MCF 10A (cell line): ENCODE measurements at regions of chr4 and their contacts with region 1.

Region 1: DNA sequence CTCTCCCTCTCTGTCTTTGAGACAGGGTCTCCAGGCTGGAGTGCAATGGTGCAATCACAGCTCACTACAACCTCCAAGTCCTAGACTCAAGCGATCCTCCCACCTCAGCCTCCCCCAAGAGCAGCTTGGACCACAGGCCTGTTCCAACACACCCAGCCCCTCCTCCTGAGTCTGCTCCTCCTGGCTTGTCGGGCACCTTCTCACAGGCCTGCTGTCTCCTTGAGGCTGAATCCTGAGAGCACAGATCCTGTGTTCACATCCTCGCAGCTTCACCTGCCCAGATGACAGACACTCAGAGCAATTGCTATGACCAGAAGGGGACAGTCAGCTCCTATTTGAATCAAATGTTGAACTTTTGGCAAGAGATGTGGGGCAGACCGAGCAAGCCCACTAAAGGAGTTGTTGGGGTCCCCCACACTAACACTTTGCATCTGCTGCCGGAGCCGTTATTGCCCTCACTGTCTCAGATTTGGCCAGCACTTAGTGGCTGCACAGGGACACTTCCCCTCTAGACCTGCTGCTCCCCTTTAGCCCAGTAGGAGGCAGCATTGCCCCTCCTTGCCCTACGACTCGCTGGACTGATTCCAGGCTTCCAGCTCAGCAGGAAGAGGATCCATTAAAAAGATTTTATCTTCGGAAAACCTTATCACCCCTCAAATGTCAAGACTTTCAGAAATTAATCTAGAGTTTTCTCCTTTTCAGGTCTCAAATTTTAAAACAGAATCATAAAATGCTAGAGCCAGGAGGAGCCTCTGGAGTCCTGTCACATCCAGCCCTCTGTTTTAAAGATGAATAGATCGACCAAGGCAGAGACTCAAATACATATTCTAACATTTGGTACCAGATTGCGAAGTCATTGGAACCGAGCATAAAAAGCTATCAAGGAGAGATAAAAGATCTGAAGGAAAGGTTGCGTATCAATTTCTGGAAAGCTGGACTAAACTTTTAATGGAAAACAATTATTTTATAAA is 113.7 kb downstream of the USP46 start:
- DNase-seq: peak; percentile 78
- H3K4me3 Mint-ChIP-seq: no peak overlapping the region
- H3K27ac Mint-ChIP-seq: no peak overlapping the region
- H3K4me1 Mint-ChIP-seq: no peaks in the 10 kb centered on the region
- H3K27me3 Mint-ChIP-seq: no peaks in the 10 kb centered on the region
- CTCF ChIP-seq: peak; percentile 89

Region 2: DNA sequence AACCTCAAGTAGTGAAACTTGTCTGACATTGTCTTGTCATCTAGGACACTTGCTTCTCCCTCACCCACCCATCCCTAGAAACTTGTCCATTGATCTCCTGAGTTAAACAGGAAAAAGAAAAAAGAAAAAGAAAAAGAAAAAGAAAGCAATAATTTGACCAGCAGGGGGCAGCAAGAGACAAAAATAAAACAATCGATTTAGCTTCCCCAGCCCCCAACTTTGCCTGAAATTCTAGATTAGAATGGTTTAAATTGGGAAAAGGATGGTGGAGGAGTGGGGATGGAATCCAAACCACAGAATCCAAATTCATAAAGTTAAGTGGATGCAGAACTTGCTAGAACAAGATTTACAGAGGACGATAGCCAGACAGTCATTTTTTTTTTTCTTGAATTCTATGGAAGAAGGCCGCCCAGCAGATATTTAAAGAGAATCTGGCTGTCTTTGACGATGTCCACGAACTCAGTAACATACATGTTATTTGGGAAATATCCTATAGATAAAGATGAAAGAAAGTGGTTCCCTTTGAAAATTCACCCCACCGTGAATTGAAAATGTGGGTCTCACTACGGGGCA is 169.2 kb before region 1 on chr4:
- CTCF ChIA-PET with region 1: interaction called, 18 read pairs
- POLR2A ChIA-PET with region 1: no interaction called
- intact Hi-C with region 1: no loop called
- DNase-seq: peak; percentile 70
- H3K4me3 Mint-ChIP-seq: no peak overlapping the region
- H3K27ac Mint-ChIP-seq: no peak overlapping the region
- H3K4me1 Mint-ChIP-seq: peaks cover 5% of the 10 kb centered on the region
- H3K27me3 Mint-ChIP-seq: peaks cover 33% of the 10 kb centered on the region
- CTCF ChIP-seq: peak; percentile 57

Region 3: GRCh38 chr4:52665592-52665991 is 120.2 kb after region 1 on chr4:
- CTCF ChIA-PET with region 1: interaction called, 13 read pairs
- POLR2A ChIA-PET with region 1: no interaction called
- intact Hi-C with region 1: loop called (anchors 2 kb)
- DNase-seq: peak; percentile 29
- H3K4me3 Mint-ChIP-seq: no peak overlapping the region
- H3K27ac Mint-ChIP-seq: no peak overlapping the region
- H3K4me1 Mint-ChIP-seq: peaks cover 10% of the 10 kb centered on the region
- H3K27me3 Mint-ChIP-seq: no peaks in the 10 kb centered on the region
- CTCF ChIP-seq: peak; percentile 24

Region 4: DNA sequence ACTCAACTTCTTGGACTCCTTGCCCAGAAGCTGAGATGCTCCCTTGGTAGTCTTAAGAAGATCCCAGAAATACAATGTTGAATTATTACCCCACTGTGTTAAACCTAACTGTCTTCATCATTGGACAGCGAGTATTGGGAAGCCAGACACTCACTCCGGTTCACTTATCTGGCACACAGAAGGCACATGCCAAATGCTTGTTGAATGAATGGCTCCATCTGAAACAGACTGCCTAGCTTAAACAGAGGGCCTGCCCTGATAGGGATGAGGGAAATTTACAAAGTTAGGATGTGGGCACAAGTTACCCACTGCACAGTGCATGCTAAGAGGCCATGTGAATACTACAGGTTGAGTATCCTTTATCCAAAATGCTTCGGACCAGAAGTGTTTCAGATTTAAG is 396.1 kb after region 1 on chr4:
- CTCF ChIA-PET with region 1: interaction called, 10 read pairs
- POLR2A ChIA-PET with region 1: no interaction called
- intact Hi-C with region 1: no loop called
- DNase-seq: no peak
- H3K4me3 Mint-ChIP-seq: no peak overlapping the region
- H3K27ac Mint-ChIP-seq: no peak overlapping the region
- H3K4me1 Mint-ChIP-seq: no peaks in the 10 kb centered on the region
- H3K27me3 Mint-ChIP-seq: no peaks in the 10 kb centered on the region
- CTCF ChIP-seq: no peak

Region 5: GRCh38 chr4:52983563-52984303 is 438.3 kb after region 1 on chr4:
- CTCF ChIA-PET with region 1: interaction called, 244 read pairs
- POLR2A ChIA-PET with region 1: interaction called, 5 read pairs
- intact Hi-C with region 1: loop called (anchors 2 kb)
- DNase-seq: peak; percentile 77
- H3K4me3 Mint-ChIP-seq: no peak overlapping the region
- H3K27ac Mint-ChIP-seq: no peak overlapping the region
- H3K4me1 Mint-ChIP-seq: no peaks in the 10 kb centered on the region
- H3K27me3 Mint-ChIP-seq: no peaks in the 10 kb centered on the region
- CTCF ChIP-seq: peak; percentile 50